Posterior vena cava (tissue), 2 donors: ENCODE measurements at regions of chr2 and their contacts with region 1.

Region 1: GRCh38 chr2:238784671-238785527 is 63.0 kb upstream of the TWIST2 start:
- DNase-seq: peak; percentile 92

Region 2: GRCh38 chr2:238720232-238720672 is 64.6 kb before region 1 on chr2:
- intact Hi-C with region 1: loop called in 1 of 2 experiments (anchors 10 kb)
- DNase-seq: no peak

Region 3: DNA sequence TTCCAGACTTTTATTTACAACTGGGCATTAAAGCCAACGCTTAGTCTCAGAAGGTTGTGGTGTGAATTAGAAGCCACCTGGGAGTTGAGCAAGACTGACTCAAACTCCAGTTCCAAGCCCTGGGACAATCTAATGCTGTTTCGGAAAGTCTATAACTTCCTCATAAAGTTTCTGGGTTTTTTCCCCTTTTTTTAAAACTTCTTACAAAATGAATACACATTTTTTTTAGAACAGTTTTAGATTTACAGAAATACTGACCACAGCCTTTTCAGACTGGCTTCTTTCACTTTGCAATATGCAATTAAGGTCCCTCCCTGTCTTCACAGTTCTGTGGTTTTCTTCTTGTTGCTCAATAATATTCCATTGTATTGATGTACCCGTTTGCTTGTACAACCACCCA is 52.9 kb before region 1 on chr2:
- intact Hi-C with region 1: loop called (anchors 10 kb)
- DNase-seq: no peak